SK-N-SH (cell line): ENCODE measurements at regions of chr16 and their contacts with region 1.

Region 1: DNA sequence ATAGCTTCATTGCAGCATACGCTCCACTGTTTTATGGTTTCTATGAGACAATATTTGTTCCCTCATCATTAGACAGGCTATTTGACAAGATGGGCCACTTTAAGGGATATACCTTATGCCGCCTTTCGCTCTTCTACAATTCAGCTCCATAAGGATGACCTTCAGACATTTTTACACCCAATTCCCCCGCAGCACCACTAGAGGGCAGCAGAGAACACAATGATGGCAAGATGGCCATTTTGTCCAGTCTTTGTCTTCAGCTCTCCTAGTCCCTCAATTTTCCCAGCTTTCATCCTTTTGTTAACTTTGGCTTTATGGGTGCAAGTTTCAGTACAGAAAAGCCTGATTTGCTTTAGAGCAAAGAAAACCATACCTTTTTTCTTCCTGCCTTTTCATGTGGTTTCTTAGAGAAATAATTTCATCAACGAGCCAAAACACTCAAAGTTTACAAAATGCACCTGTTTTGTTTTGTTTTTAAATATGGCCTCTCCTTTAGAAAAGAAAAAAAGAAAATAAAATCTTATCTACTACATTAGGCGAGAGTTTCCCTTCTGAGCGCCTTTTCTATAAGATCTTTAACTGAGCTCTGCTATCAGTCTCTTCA is 355.3 kb downstream of the TOX3 start:
- DNase-seq: peak; percentile 46
- H3K4me3 ChIP-seq: peak overlapping the region in 1 of 2 experiments; percentile 37; a peak in 1 of 4 replicates
- H3K27ac ChIP-seq: no peak overlapping the region
- H3K4me1 ChIP-seq: no peaks in the 10 kb centered on the region; a peak in 1 of 4 replicates
- H3K27me3 ChIP-seq: no peaks in the 10 kb centered on the region
- CTCF ChIP-seq: peak; percentile 87
- EP300 ChIP-seq: no peak
- RAD21 ChIP-seq: peak; percentile 90

Region 2: GRCh38 chr16:52068447-52069074 is 123.1 kb before region 1 on chr16:
- CTCF ChIA-PET with region 1: interaction called, 11 read pairs
- POLR2A ChIA-PET with region 1: no interaction called
- DNase-seq: peak; percentile 1
- H3K4me3 ChIP-seq: no peak overlapping the region
- H3K27ac ChIP-seq: no peak overlapping the region
- H3K4me1 ChIP-seq: no peaks in the 10 kb centered on the region
- H3K27me3 ChIP-seq: no peaks in the 10 kb centered on the region
- CTCF ChIP-seq: no peak
- EP300 ChIP-seq: no peak
- RAD21 ChIP-seq: peak; percentile 48

Region 3: GRCh38 chr16:52171481-52171880 is 20.2 kb before region 1 on chr16:
- CTCF ChIA-PET with region 1: interaction called, 11 read pairs
- POLR2A ChIA-PET with region 1: no interaction called
- DNase-seq: no peak
- H3K4me3 ChIP-seq: no peak overlapping the region
- H3K27ac ChIP-seq: no peak overlapping the region
- H3K4me1 ChIP-seq: no peaks in the 10 kb centered on the region; a peak in 1 of 4 replicates
- H3K27me3 ChIP-seq: no peaks in the 10 kb centered on the region
- CTCF ChIP-seq: no peak
- EP300 ChIP-seq: no peak
- RAD21 ChIP-seq: no peak

Region 4: GRCh38 chr16:52203096-52203495 is 11.5 kb after region 1 on chr16:
- CTCF ChIA-PET with region 1: interaction called, 21 read pairs
- POLR2A ChIA-PET with region 1: no interaction called
- DNase-seq: no peak
- H3K4me3 ChIP-seq: no peak overlapping the region
- H3K27ac ChIP-seq: no peak overlapping the region
- H3K4me1 ChIP-seq: no peaks in the 10 kb centered on the region
- H3K27me3 ChIP-seq: no peaks in the 10 kb centered on the region
- CTCF ChIP-seq: no peak
- EP300 ChIP-seq: no peak
- RAD21 ChIP-seq: no peak

Region 5: DNA sequence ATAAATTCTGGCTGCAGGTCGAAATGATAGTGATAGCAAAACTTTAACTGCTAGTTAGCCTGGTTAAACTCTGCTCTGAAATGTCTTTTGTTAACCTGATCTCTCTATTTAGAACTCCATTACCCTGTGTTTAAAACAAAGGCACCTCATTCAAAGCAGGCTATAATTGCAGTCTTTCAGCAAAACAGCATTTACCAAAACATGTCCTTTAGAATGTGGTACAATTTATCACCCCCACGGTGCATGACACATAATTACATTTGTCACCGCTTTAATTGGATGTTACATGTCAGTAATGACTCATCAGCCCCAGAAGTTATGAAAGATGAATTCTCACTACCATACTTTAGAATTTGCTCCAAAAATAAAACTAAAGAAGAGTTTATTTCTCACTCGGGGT is 59.9 kb after region 1 on chr16:
- CTCF ChIA-PET with region 1: no interaction called
- POLR2A ChIA-PET with region 1: no interaction called
- DNase-seq: no peak
- H3K4me3 ChIP-seq: no peak overlapping the region
- H3K27ac ChIP-seq: no peak overlapping the region
- H3K4me1 ChIP-seq: no peaks in the 10 kb centered on the region; a peak in 1 of 4 replicates
- H3K27me3 ChIP-seq: no peaks in the 10 kb centered on the region
- CTCF ChIP-seq: no peak
- EP300 ChIP-seq: no peak
- RAD21 ChIP-seq: no peak

Region 6: GRCh38 chr16:52318302-52319004 is 126.8 kb after region 1 on chr16:
- CTCF ChIA-PET with region 1: no interaction called
- POLR2A ChIA-PET with region 1: no interaction called
- DNase-seq: no peak
- H3K4me3 ChIP-seq: no peak overlapping the region
- H3K27ac ChIP-seq: no peak overlapping the region
- H3K4me1 ChIP-seq: no peaks in the 10 kb centered on the region
- H3K27me3 ChIP-seq: no peaks in the 10 kb centered on the region
- CTCF ChIP-seq: no peak
- EP300 ChIP-seq: no peak
- RAD21 ChIP-seq: no peak

Region 7: DNA sequence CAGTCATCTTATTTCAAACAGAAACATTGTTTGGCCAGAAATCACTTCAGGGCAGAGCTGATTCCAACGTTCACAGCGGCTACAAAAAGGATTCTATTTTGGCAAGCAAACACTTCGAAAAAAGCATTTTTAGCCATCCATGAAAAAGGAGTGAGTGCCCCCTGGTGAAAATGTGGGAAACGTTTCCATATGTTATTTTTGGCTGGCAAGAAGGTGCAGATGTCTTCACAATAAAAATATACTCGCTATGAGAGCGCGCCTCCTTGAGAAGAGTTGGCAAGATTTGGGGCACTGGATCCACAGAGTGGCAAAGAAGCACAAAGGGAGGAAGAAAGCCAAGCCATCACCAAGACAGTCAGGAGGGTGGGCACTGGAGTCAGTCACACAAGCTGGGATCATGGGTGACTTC is 670.0 kb after region 1 on chr16:
- CTCF ChIA-PET with region 1: interaction called, 19 read pairs
- POLR2A ChIA-PET with region 1: no interaction called
- DNase-seq: peak; percentile 5
- H3K4me3 ChIP-seq: no peak overlapping the region
- H3K27ac ChIP-seq: no peak overlapping the region
- H3K4me1 ChIP-seq: no peaks in the 10 kb centered on the region
- H3K27me3 ChIP-seq: no peaks in the 10 kb centered on the region
- CTCF ChIP-seq: no peak; the same call in 1 of the 2 replicates
- EP300 ChIP-seq: no peak
- RAD21 ChIP-seq: peak; percentile 55

Region 8: DNA sequence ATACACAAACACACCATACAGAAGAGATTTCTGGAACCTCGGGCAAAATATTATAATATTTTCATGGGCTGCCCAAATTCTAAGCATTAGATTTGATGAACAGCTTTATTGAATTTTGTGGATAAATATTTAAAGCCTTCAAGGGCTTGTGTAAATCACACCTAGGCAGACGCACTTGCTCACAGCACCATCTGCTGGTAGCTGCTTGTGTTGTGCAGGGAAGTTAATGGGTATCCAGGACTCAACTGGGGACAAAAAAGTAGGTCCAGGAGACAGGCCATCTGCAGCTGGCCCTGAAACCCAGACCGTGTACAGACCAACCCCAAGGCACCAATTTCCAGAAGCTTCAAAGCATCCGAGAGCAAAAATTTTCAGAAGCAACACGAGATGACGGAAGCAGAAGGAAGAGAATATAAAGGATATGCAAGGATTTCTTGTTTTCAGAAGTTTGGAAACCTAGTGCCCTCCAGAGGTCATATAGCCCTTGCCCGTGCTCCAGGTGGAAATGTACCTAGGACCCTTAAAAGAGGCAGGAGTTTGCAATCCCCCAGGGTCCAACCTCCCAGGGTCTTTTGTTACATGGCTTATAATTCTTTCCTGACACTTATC is 721.0 kb after region 1 on chr16:
- CTCF ChIA-PET with region 1: interaction called, 115 read pairs
- POLR2A ChIA-PET with region 1: no interaction called
- DNase-seq: peak; percentile 55
- H3K4me3 ChIP-seq: peak overlapping the region in 1 of 2 experiments; percentile 50; a peak in 1 of 4 replicates
- H3K27ac ChIP-seq: no peak overlapping the region
- H3K4me1 ChIP-seq: no peaks in the 10 kb centered on the region
- H3K27me3 ChIP-seq: no peaks in the 10 kb centered on the region
- CTCF ChIP-seq: peak; percentile 74
- EP300 ChIP-seq: no peak
- RAD21 ChIP-seq: peak; percentile 78